CD4-positive, alpha-beta T cell (primary cell): ENCODE measurements at regions of chr6 and their contacts with region 1.

Region 1: DNA sequence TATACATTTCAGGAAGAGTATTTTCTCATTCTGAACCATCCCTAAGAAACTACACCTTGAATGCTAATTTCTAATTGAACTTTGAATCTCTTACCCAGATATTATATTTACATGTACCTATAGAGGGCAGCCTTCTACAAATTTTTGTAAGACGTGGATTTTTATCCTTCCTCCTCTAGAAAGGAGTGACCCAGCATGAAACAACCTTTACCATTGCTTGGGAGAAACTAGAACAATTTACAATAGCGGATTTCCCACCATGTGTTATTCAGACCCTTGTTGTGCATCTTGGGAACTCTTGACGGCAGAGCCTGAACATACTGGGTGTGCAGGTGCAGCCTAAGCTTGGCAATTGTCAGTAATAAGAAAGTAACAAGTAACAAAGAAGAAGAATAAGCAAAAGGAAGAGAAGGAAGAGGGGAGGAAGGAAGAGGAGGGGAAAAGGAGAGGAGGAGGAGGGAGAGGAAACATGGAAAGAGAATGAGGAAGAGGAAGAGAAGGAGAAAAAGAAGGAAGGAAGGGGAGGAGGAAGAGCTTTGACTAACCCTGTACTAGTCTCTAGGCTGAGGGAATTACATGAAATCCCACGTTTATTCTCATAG is 10.8 kb upstream of the TAAR1 start:
- DNase-seq: peak in 3 of 14 experiments; percentile 41 to 48 (median 42)
- ATAC-seq: peak; percentile 37
- H3K4me3 ChIP-seq: no peak overlapping the region
- H3K4me3 Mint-ChIP-seq: no peak overlapping the region
- H3K27ac ChIP-seq: no peak overlapping the region
- H3K27ac Mint-ChIP-seq: no peak overlapping the region
- H3K4me1 ChIP-seq: peaks cover 3% of the 10 kb centered on the region
- H3K4me1 Mint-ChIP-seq: no peaks in the 10 kb centered on the region
- H3K27me3 ChIP-seq: no peaks in the 10 kb centered on the region
- H3K27me3 Mint-ChIP-seq: peaks cover 11% of the 10 kb centered on the region
- CTCF ChIP-seq: peak; percentile 76

Region 2: DNA sequence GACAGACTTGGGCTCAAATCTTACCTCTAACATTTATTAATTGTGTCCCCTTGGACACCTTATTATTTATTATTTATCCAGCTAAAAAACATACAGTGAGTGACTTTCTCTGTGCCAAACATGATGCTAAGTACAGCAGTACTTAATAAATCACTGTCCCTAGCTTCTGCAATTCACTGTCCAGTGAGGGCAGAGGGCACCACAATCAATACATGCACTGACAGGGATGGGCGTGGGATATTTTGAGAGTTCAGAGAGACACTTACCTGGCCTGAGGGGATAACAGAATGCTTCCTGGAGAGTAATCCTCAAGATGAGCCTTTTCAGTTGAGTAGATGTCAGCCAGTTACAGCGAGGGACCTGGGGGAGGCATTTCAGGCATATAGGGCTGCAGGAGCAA is 36.4 kb before region 1 on chr6:
- CTCF ChIA-PET with region 1: no interaction called
- POLR2A ChIA-PET with region 1: no interaction called
- intact Hi-C with region 1: no loop called
- DNase-seq: no peak
- ATAC-seq: no peak
- H3K4me3 ChIP-seq: no peak overlapping the region
- H3K4me3 Mint-ChIP-seq: no peak overlapping the region
- H3K27ac ChIP-seq: no peak overlapping the region
- H3K27ac Mint-ChIP-seq: no peak overlapping the region
- H3K4me1 ChIP-seq: no peaks in the 10 kb centered on the region
- H3K4me1 Mint-ChIP-seq: no peaks in the 10 kb centered on the region
- H3K27me3 ChIP-seq: peaks cover 9 to 11% of the 10 kb centered on the region in 2 experiments
- H3K27me3 Mint-ChIP-seq: peaks cover 43% of the 10 kb centered on the region
- CTCF ChIP-seq: no peak

Region 3: GRCh38 chr6:132768051-132768517 is 98.3 kb after region 1 on chr6:
- CTCF ChIA-PET with region 1: interaction called, 3 read pairs
- POLR2A ChIA-PET with region 1: no interaction called
- intact Hi-C with region 1: loop called in 1 of 2 experiments (anchors 5 kb)
- DNase-seq: peak in 3 of 14 experiments; percentile 16 to 47 (median 45)
- ATAC-seq: peak; percentile 38
- H3K4me3 ChIP-seq: no peak overlapping the region
- H3K4me3 Mint-ChIP-seq: no peak overlapping the region
- H3K27ac ChIP-seq: no peak overlapping the region
- H3K27ac Mint-ChIP-seq: no peak overlapping the region
- H3K4me1 ChIP-seq: peaks cover 8% of the 10 kb centered on the region
- H3K4me1 Mint-ChIP-seq: peaks cover 15% of the 10 kb centered on the region
- H3K27me3 ChIP-seq: no peaks in the 10 kb centered on the region
- H3K27me3 Mint-ChIP-seq: no peaks in the 10 kb centered on the region
- CTCF ChIP-seq: peak; percentile 27

Region 4: DNA sequence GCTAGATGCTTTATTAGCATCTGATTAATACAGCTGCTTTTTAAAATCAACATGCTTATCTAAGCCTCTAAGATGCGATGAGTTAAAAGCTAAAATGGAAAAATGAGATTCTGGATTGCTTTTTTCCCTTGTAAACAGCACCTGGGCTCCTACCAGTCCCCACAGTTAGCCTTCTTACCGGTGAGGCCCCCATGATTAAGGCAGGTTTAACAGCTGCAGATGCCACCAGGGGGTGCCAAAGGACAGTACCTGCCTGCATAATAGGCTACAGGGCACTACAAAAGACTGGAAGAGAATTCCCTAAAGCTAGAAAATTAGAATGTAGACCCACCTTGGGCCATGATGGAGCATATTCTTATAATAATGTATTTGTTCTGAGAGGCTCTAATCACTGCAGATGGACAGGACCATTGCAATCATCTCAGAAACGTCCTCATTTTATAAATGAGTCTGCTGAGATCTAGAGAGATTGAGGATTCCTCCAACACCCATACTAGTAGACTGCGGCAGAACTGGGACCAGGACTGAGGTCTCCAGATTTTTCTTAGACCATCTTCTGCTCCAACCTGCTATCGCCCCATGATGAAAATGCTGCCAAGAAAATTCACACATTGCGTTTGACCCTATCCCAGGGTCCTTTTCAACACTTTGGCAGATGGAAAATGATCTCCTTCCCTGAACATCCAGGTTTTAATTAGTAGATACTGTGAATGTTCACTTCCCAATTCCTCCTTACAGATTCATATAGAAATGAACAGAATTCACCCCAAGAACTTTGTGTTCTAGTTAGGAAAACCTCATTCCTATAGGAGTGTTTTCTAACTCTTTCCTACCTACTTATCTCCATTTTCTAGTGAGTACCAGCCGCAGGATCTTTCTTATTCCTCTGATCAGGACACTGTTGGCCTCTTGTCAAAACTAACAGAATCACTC is 293.4 kb after region 1 on chr6:
- CTCF ChIA-PET with region 1: no interaction called
- POLR2A ChIA-PET with region 1: no interaction called
- intact Hi-C with region 1: loop called (anchors 5 kb)
- DNase-seq: peak; percentile 9 to 53 (median 34)
- ATAC-seq: peak; percentile 56
- H3K4me3 ChIP-seq: no peak overlapping the region
- H3K4me3 Mint-ChIP-seq: no peak overlapping the region
- H3K27ac ChIP-seq: no peak overlapping the region
- H3K27ac Mint-ChIP-seq: no peak overlapping the region
- H3K4me1 ChIP-seq: no peaks in the 10 kb centered on the region
- H3K4me1 Mint-ChIP-seq: no peaks in the 10 kb centered on the region
- H3K27me3 ChIP-seq: no peaks in the 10 kb centered on the region
- H3K27me3 Mint-ChIP-seq: peaks cover 38% of the 10 kb centered on the region
- CTCF ChIP-seq: peak; percentile 81

Region 5: DNA sequence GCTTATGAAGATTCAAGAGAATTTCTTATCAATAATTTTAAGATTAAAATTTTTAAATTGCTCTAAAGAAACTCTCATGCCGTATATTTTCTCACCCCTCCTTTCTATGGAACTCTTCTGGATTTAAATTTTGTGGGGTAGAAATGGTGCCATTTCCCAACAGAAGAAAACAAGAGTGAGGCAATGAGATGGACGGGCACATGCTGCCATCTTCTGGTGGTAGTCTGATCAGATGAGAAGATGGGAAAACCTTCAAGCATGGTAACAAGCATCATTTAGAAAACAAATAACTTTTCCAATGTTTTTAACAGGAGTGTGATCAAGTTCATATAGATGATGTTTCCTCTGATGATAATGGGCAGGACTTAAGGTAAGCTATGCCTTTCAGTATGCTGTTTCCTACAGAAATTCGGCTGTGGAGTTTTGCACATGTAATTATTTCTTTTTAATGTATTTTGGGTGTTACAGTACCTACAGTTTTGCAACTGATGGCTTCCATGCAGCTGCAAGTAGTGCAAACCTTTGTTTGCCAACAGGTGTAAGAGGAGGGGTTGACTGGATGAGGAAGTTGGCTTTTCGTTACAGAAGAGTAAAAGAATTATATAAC is 842.7 kb after region 1 on chr6:
- CTCF ChIA-PET with region 1: no interaction called
- POLR2A ChIA-PET with region 1: no interaction called
- intact Hi-C with region 1: loop called in 1 of 2 experiments (anchors 5 kb)
- DNase-seq: peak in 4 of 14 experiments; percentile 3 to 29 (median 18)
- ATAC-seq: no peak
- H3K4me3 ChIP-seq: no peak overlapping the region
- H3K4me3 Mint-ChIP-seq: no peak overlapping the region
- H3K27ac ChIP-seq: no peak overlapping the region
- H3K27ac Mint-ChIP-seq: no peak overlapping the region
- H3K4me1 ChIP-seq: no peaks in the 10 kb centered on the region
- H3K4me1 Mint-ChIP-seq: no peaks in the 10 kb centered on the region
- H3K27me3 ChIP-seq: no peaks in the 10 kb centered on the region
- H3K27me3 Mint-ChIP-seq: peaks cover 31% of the 10 kb centered on the region
- CTCF ChIP-seq: no peak

Region 6: DNA sequence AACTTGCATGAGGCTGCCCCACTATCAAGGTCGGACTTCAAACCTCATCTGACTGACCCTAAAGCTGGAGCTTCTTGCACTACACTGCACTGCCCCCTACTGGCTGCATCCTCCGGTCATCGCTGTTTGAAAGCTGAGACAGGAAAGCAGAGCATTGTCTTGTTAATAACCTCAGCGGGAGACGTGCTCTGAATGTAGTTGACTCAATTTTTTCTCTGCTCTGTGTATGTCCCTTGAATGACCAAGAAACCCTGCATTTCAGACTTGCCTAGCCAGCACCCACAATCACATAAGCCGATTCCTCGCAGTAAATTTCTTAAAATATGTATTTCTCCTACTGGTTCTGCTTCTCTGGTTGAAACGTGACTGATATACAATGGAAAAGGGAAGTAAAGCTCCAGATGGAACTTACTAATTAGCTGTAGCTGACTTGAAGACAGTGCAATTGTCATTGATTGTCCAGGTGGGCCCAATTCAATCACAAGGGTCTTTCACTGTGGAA is 1246.9 kb after region 1 on chr6:
- CTCF ChIA-PET with region 1: no interaction called
- POLR2A ChIA-PET with region 1: no interaction called
- intact Hi-C with region 1: loop called in 1 of 2 experiments (anchors 5 kb)
- DNase-seq: peak; percentile 43 to 80 (median 62)
- ATAC-seq: peak; percentile 60
- H3K4me3 ChIP-seq: no peak overlapping the region
- H3K4me3 Mint-ChIP-seq: no peak overlapping the region
- H3K27ac ChIP-seq: no peak overlapping the region
- H3K27ac Mint-ChIP-seq: no peak overlapping the region
- H3K4me1 ChIP-seq: peaks cover 4% of the 10 kb centered on the region
- H3K4me1 Mint-ChIP-seq: no peaks in the 10 kb centered on the region
- H3K27me3 ChIP-seq: peaks cover 0 to 22% of the 10 kb centered on the region in 2 experiments
- H3K27me3 Mint-ChIP-seq: peaks cover 44% of the 10 kb centered on the region
- CTCF ChIP-seq: peak; percentile 89